ENCODE measurements at regions of chr14 and their contacts with region 1.

Region 1: GRCh38 chr14:20799892-20800544 is 2.6 kb downstream of the RNASE1 start:
- DNase-seq: peak in 1 of 2 experiments; percentile 45
- H3K4me3 ChIP-seq: no peak overlapping the region
- H3K27ac ChIP-seq: no peak overlapping the region
- H3K4me1 ChIP-seq: no peaks in the 10 kb centered on the region
- H3K27me3 ChIP-seq: no peaks in the 10 kb centered on the region
- CTCF ChIP-seq: no peak

Region 2: GRCh38 chr14:20697273-20698017 is 102.6 kb before region 1 on chr14:
- CTCF ChIA-PET with region 1: no interaction called
- POLR2A ChIA-PET with region 1: interaction called, 8 read pairs
- intact Hi-C with region 1: loop called (anchors 2 kb)
- DNase-seq: peak; percentile 51 to 55
- H3K4me3 ChIP-seq: no peak overlapping the region
- H3K27ac ChIP-seq: no peak overlapping the region
- H3K4me1 ChIP-seq: no peaks in the 10 kb centered on the region
- H3K27me3 ChIP-seq: no peaks in the 10 kb centered on the region
- CTCF ChIP-seq: peak; percentile 73

Region 3: GRCh38 chr14:20707622-20708021 is 92.4 kb before region 1 on chr14:
- CTCF ChIA-PET with region 1: no interaction called
- POLR2A ChIA-PET with region 1: interaction called, 6 read pairs
- intact Hi-C with region 1: loop called (anchors 2 kb)
- DNase-seq: peak; percentile 43 to 87
- H3K4me3 ChIP-seq: no peak overlapping the region
- H3K27ac ChIP-seq: peak overlapping the region; percentile 87
- H3K4me1 ChIP-seq: 0 out of 2 replicates have a peak, but pooled peaks cover 10% of the 10 kb centered on the region
- H3K27me3 ChIP-seq: no peaks in the 10 kb centered on the region
- CTCF ChIP-seq: no peak

Region 4: DNA sequence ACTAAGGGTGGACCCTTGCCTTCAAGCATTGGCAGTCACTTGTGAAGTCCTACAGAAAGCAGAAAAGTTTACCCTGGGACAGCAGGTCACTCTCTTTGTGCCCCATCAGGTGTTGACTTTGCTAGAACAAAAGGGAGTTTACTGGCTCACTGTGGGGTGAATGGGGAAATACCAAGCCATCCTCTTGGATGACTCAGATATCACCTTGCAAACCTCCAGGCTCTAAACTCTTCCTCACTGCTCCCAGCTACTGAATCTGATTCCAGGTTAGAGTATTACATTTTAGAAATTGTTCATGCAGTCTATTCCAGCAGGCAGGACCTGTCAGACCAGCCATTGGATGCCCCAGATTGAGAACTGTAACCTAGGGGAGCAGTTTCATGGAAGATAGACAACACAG is 39.1 kb before region 1 on chr14:
- CTCF ChIA-PET with region 1: interaction called, 4 read pairs
- POLR2A ChIA-PET with region 1: no interaction called
- intact Hi-C with region 1: loop called (anchors 2 kb)
- DNase-seq: peak; percentile 44 to 60
- H3K4me3 ChIP-seq: no peak overlapping the region
- H3K27ac ChIP-seq: no peak overlapping the region
- H3K4me1 ChIP-seq: peaks cover 7% of the 10 kb centered on the region
- H3K27me3 ChIP-seq: no peaks in the 10 kb centered on the region
- CTCF ChIP-seq: no peak

Region 5: DNA sequence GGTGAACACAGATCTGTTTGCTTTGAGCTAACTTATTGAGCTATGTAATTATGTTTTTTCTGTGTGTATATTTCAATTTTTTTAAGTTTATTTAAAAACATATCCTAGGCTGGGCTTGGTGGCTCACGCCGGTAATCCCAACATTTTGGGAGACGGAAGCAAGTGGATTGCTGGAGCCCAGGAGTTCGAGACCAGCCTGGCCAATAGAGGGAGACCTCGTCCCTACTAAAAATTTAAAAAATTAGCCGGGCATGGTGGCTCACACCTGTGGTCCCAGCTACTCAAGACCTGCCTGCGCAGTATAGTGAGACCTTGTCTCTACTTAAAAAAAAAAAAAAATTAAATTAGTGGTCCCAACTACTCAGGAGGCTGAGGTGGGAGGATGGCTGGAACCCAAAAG is 18.8 kb after region 1 on chr14:
- CTCF ChIA-PET with region 1: no interaction called
- POLR2A ChIA-PET with region 1: interaction called, 24 read pairs
- intact Hi-C with region 1: no loop called
- DNase-seq: no peak
- H3K4me3 ChIP-seq: no peak overlapping the region
- H3K27ac ChIP-seq: no peak overlapping the region
- H3K4me1 ChIP-seq: no peaks in the 10 kb centered on the region
- H3K27me3 ChIP-seq: no peaks in the 10 kb centered on the region
- CTCF ChIP-seq: no peak

Region 6: GRCh38 chr14:20855652-20856291 is 55.8 kb after region 1 on chr14:
- CTCF ChIA-PET with region 1: no interaction called
- POLR2A ChIA-PET with region 1: interaction called, 3 read pairs
- intact Hi-C with region 1: loop called (anchors 10 kb)
- DNase-seq: peak in 1 of 2 experiments; percentile 33
- H3K4me3 ChIP-seq: no peak overlapping the region
- H3K27ac ChIP-seq: no peak overlapping the region
- H3K4me1 ChIP-seq: no peaks in the 10 kb centered on the region
- H3K27me3 ChIP-seq: peaks cover 6% of the 10 kb centered on the region; the same call in 1 of the 2 replicates
- CTCF ChIP-seq: peak; percentile 65